GM12878 (cell line): ENCODE measurements at regions of chr1 and their contacts with region 1.

Region 1: DNA sequence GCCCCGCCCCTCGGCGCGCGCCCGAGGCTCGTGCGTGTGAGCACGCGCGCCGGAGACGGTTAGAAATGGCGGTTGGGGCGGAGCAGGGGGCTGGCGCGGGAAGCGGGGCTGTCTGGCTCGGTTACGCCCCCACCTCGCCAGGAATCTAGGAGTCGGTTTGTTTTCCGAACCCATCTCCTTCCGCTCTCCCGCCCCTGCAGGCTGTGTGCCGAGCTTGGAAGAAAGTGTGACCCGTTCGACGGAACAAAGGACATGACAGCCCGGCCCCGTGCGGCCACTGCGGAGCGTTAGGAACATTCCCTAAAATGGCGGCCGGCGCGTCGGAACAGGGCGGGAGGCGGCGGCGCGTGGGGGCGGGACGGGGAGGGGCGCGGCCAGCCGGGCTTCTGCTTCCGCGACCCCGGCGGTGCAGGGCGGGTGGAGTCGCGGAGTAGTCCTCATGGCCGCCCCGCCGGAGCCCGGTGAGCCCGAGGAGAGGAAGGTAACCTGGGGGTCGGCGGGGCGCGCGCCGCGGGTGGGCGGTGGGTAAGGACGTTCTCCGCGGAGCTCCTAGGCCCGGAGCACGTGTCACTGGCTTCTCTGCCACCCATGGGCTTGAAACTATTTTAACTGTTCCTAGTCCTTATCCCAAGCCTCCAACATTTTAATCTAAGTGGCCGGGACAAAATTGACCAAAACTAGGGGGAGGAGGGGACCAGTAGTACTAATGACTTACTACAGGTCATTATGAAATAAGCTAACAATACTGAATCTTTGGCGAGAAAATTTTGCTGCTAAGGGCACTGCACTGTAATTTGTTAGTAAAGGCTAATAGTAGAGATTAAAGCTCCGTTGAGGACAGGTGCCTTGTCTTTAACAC is at the start of gene COX20:
- DNase-seq: peak; percentile 60
- ATAC-seq: peak; percentile 74
- H3K4me3 ChIP-seq: peak within 1 kb of the TSS; percentile 72
- H3K27ac ChIP-seq: peak within 1 kb of the TSS; percentile 99
- H3K4me1 ChIP-seq: peaks cover 6% of the 10 kb centered on the region
- H3K27me3 ChIP-seq: no peaks in the 10 kb centered on the region
- CTCF ChIP-seq: no peak
- EP300 ChIP-seq: 0 out of 4 replicates have a peak, but pooled peaks of 1 of the 2 experiments have one; percentile 3
- POLR2A ChIP-seq: peak; percentile 91
- RAD21 ChIP-seq: no peak
- polyA plus RNA-seq, gene COX20: 91.9 to 95.3 TPM

Region 2: DNA sequence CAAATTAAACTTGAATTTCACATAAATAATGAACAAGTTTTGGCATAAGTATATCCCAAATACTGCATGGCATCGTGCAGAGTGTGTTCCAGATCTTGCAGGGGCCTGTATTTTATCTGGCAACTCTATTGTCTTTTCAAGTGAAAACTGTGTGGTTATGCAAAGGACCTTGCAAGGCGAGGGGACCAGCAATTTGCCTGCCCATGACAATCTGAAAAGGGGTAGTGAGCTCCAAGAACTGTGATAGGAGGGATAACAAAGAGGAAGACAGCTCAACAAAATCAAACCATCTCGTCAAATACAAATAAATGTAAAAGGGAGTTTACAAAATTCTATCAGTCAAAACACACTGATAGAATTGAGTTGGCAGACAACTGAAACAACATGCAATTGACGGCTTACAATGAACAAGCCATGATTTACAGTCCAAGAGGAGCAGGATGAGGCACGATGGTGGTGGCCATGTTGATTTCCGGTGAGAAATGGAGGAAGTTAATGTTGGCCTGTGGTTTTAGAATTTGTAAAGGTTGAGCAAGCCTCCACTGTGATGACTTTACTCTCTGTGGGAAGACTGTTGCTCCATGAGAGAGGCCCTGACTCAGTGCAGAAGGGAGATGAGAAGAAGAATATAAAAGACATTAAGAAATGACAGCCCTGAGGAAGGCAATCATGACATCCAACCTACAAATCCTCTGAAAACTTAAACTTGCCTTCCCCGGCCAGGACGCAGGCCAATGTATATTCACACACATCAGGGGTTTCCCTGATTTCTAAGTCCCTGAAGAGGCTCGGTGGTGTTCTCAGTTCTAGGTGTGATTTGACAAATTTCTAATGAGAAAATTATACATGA is 516.0 kb before region 1 on chr1:
- CTCF ChIA-PET with region 1: no interaction called
- POLR2A ChIA-PET with region 1: no interaction called
- RAD21 ChIA-PET with region 1: no interaction called
- SMC1A ChIA-PET with region 1: no interaction called
- in situ Hi-C with region 1: no loop called
- intact Hi-C with region 1: loop called (anchors 10 kb)
- DNase-seq: peak; percentile 84
- ATAC-seq: peak; percentile 85
- H3K4me3 ChIP-seq: peak overlapping the region; percentile 20; the same call in 1 of the 2 replicates
- H3K27ac ChIP-seq: peak overlapping the region; percentile 94
- H3K4me1 ChIP-seq: peaks cover 24% of the 10 kb centered on the region
- H3K27me3 ChIP-seq: no peaks in the 10 kb centered on the region
- CTCF ChIP-seq: no peak
- EP300 ChIP-seq: peak; percentile 59 to 62; a peak in 2 of 4 replicates
- POLR2A ChIP-seq: no peak
- RAD21 ChIP-seq: no peak

Region 3: GRCh38 chr1:244815600-244816099 is 19.9 kb before region 1 on chr1:
- CTCF ChIA-PET with region 1: interaction called, 10 read pairs
- POLR2A ChIA-PET with region 1: interaction called, 55 read pairs
- RAD21 ChIA-PET with region 1: interaction called, 27 read pairs
- SMC1A ChIA-PET with region 1: interaction called, 11 read pairs
- in situ Hi-C with region 1: no loop called
- intact Hi-C with region 1: loop called (anchors 1 kb)
- DNase-seq: peak; percentile 30
- ATAC-seq: peak; percentile 70
- H3K4me3 ChIP-seq: peak overlapping the region; percentile 46; the same call in 1 of the 2 replicates
- H3K27ac ChIP-seq: peak overlapping the region; percentile 24; the same call in 1 of the 2 replicates
- H3K4me1 ChIP-seq: peaks cover 5% of the 10 kb centered on the region
- H3K27me3 ChIP-seq: no peaks in the 10 kb centered on the region
- CTCF ChIP-seq: no peak
- EP300 ChIP-seq: peak in 1 of 2 experiments; percentile 9; a peak in 1 of 4 replicates
- POLR2A ChIP-seq: no peak
- RAD21 ChIP-seq: no peak

Region 4: GRCh38 chr1:244849189-244849866 is 13.8 kb after region 1 on chr1:
- CTCF ChIA-PET with region 1: interaction called, 6 read pairs
- POLR2A ChIA-PET with region 1: interaction called, 350 read pairs
- RAD21 ChIA-PET with region 1: interaction called, 5 read pairs
- SMC1A ChIA-PET with region 1: interaction called, 360 read pairs
- in situ Hi-C with region 1: no loop called
- intact Hi-C with region 1: no loop called
- DNase-seq: no peak
- ATAC-seq: peak; percentile 5; the same call in 2 of the 3 replicates
- H3K4me3 ChIP-seq: no peak overlapping the region
- H3K27ac ChIP-seq: no peak overlapping the region
- H3K4me1 ChIP-seq: no peaks in the 10 kb centered on the region
- H3K27me3 ChIP-seq: no peaks in the 10 kb centered on the region
- CTCF ChIP-seq: no peak
- EP300 ChIP-seq: no peak
- POLR2A ChIP-seq: no peak; the same call in 1 of the 2 replicates
- RAD21 ChIP-seq: no peak

Region 5: DNA sequence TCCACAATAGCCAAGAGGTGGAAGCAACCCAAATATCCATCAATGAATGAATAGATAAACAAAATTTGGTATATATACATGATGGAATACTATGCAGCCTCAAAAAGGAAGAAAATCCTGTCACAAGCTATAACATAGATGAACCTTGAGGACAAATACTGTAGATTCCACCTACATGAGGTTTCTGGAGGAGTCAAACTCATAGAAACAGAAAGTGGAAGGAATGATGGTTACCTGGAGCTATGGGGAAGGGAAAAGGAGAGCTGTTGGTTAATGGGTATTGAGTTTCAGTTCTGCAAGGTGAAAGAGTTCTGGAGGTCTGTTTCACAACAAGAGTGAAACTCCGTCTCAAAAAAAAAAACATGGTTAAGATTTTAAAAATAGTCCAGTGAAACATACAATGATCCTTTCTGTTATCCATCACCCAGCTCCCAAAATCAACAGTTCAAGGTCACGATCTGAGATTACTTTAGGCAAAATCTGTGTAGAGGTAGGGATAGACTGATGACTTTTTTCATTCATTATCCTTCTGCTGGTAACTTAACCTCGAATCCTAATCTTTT is 109.7 kb after region 1 on chr1:
- CTCF ChIA-PET with region 1: interaction called, 6 read pairs
- POLR2A ChIA-PET with region 1: interaction called, 17 read pairs
- RAD21 ChIA-PET with region 1: interaction called, 16 read pairs
- SMC1A ChIA-PET with region 1: interaction called, 7 read pairs
- in situ Hi-C with region 1: no loop called
- intact Hi-C with region 1: loop called (anchors 10 kb)
- DNase-seq: peak; percentile 85
- ATAC-seq: peak; percentile 74
- H3K4me3 ChIP-seq: peak overlapping the region; percentile 33
- H3K27ac ChIP-seq: peak overlapping the region; percentile 88
- H3K4me1 ChIP-seq: peaks cover 25% of the 10 kb centered on the region
- H3K27me3 ChIP-seq: no peaks in the 10 kb centered on the region
- CTCF ChIP-seq: no peak
- EP300 ChIP-seq: peak; percentile 54 to 73; a peak in 3 of 4 replicates
- POLR2A ChIP-seq: no peak
- RAD21 ChIP-seq: no peak

Region 6: GRCh38 chr1:244970661-244971551 is 135.4 kb after region 1 on chr1:
- CTCF ChIA-PET with region 1: no interaction called
- POLR2A ChIA-PET with region 1: interaction called, 5 read pairs
- RAD21 ChIA-PET with region 1: interaction called, 7 read pairs
- SMC1A ChIA-PET with region 1: interaction called, 13 read pairs
- in situ Hi-C with region 1: no loop called
- intact Hi-C with region 1: loop called (anchors 1 kb)
- DNase-seq: peak; percentile 74
- ATAC-seq: peak; percentile 84
- H3K4me3 ChIP-seq: peak overlapping the region; percentile 58
- H3K27ac ChIP-seq: peak overlapping the region; percentile 98
- H3K4me1 ChIP-seq: no peaks in the 10 kb centered on the region
- H3K27me3 ChIP-seq: no peaks in the 10 kb centered on the region
- CTCF ChIP-seq: peak; percentile 48 to 61 (median 53)
- EP300 ChIP-seq: no peak
- POLR2A ChIP-seq: peak; percentile 90
- RAD21 ChIP-seq: peak; percentile 24; the same call in 1 of the 2 replicates

Region 7: GRCh38 chr1:245008761-245009160 is 173.3 kb after region 1 on chr1:
- CTCF ChIA-PET with region 1: no interaction called
- POLR2A ChIA-PET with region 1: interaction called, 10 read pairs
- RAD21 ChIA-PET with region 1: no interaction called
- SMC1A ChIA-PET with region 1: no interaction called
- in situ Hi-C with region 1: no loop called
- intact Hi-C with region 1: no loop called
- DNase-seq: no peak
- ATAC-seq: no peak
- H3K4me3 ChIP-seq: no peak overlapping the region
- H3K27ac ChIP-seq: no peak overlapping the region
- H3K4me1 ChIP-seq: no peaks in the 10 kb centered on the region
- H3K27me3 ChIP-seq: no peaks in the 10 kb centered on the region
- CTCF ChIP-seq: no peak
- EP300 ChIP-seq: no peak
- POLR2A ChIP-seq: no peak
- RAD21 ChIP-seq: no peak